ENCODE measurements at regions of chr17 and their contacts with region 1.

Region 1: GRCh38 chr17:49031965-49032928 is 35.1 kb downstream of the IGF2BP1 start:
- DNase-seq: peak; percentile 92 to 93
- H3K4me3 ChIP-seq: no peak overlapping the region
- H3K4me3 Mint-ChIP-seq: peak overlapping the region; percentile 0
- H3K27ac Mint-ChIP-seq: peak overlapping the region; percentile 34
- H3K4me1 ChIP-seq: peaks cover 21% of the 10 kb centered on the region
- H3K4me1 Mint-ChIP-seq: peaks cover 52% of the 10 kb centered on the region
- H3K27me3 ChIP-seq: no peaks in the 10 kb centered on the region
- H3K27me3 Mint-ChIP-seq: no peaks in the 10 kb centered on the region
- CTCF ChIP-seq: peak; percentile 98 to 99

Region 2: GRCh38 chr17:48678141-48678971 is 353.9 kb before region 1 on chr17:
- CTCF ChIA-PET with region 1: interaction called, 5 read pairs
- POLR2A ChIA-PET with region 1: no interaction called
- intact Hi-C with region 1: loop called (anchors 10 kb)
- DNase-seq: peak; percentile 69 to 87
- H3K4me3 ChIP-seq: no peak overlapping the region
- H3K4me3 Mint-ChIP-seq: no peak overlapping the region
- H3K27ac Mint-ChIP-seq: no peak overlapping the region
- H3K4me1 ChIP-seq: no peaks in the 10 kb centered on the region
- H3K4me1 Mint-ChIP-seq: no peaks in the 10 kb centered on the region
- H3K27me3 ChIP-seq: no peaks in the 10 kb centered on the region
- H3K27me3 Mint-ChIP-seq: peaks cover 8% of the 10 kb centered on the region
- CTCF ChIP-seq: peak; percentile 99

Region 3: GRCh38 chr17:48892940-48893645 is 139.2 kb before region 1 on chr17:
- CTCF ChIA-PET with region 1: interaction called, 46 read pairs
- POLR2A ChIA-PET with region 1: interaction called, 9 read pairs
- intact Hi-C with region 1: loop called (anchors 1 kb)
- DNase-seq: no peak
- H3K4me3 ChIP-seq: peak overlapping the region; percentile 73
- H3K4me3 Mint-ChIP-seq: peak overlapping the region; percentile 84
- H3K27ac Mint-ChIP-seq: peak overlapping the region; percentile 90
- H3K4me1 ChIP-seq: peaks cover 13% of the 10 kb centered on the region
- H3K4me1 Mint-ChIP-seq: peaks cover 12% of the 10 kb centered on the region
- H3K27me3 ChIP-seq: no peaks in the 10 kb centered on the region
- H3K27me3 Mint-ChIP-seq: peaks cover 2% of the 10 kb centered on the region
- CTCF ChIP-seq: no peak

Region 4: DNA sequence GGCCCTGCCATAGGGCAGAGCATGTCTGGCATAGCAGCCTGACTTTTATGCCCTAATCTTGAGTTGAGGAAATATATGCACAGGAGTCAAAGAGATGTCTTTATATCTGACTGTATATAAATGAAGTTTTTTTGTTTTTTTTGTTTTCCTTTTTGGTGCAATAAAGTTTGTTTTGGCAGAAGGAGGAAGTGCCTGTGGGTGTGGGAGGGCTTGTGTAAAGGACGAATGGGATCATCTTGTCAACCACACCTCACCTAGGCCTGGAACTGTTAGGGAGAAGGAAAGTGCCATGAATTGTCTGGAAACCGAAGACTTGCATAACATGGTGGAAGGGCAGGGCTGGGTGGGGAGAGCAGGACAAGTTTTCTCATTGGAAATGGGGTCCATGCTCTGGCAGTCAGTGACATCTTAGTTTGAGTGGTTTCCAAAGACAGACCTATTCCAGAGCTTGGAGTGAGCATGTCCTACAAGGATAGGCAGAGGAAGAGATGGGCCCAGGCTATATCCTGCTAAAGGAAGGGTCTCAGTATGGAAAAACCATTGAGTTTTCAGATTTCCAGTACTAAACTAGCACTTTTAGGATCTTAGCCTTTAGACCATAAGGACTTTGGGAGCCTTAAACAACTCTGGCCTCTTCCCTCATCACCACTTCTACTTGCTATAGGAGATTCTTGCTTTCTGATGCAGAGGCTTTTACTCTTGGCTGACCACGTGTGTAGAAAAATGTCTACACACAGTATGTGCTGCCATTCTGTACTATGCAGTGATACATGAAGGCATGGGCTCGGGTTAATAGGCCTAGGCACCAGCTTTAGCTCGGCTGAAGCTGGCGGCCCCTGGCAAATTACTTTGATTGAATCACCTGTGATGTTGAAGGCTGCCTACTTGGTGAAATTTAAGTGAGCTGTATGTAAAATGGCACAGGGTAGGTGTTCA is 103.1 kb before region 1 on chr17:
- CTCF ChIA-PET with region 1: interaction called, 10 read pairs
- POLR2A ChIA-PET with region 1: interaction called, 5 read pairs
- intact Hi-C with region 1: no loop called
- DNase-seq: no peak
- H3K4me3 ChIP-seq: no peak overlapping the region
- H3K4me3 Mint-ChIP-seq: no peak overlapping the region
- H3K27ac Mint-ChIP-seq: no peak overlapping the region
- H3K4me1 ChIP-seq: no peaks in the 10 kb centered on the region
- H3K4me1 Mint-ChIP-seq: no peaks in the 10 kb centered on the region
- H3K27me3 ChIP-seq: no peaks in the 10 kb centered on the region
- H3K27me3 Mint-ChIP-seq: no peaks in the 10 kb centered on the region
- CTCF ChIP-seq: no peak

Region 5: DNA sequence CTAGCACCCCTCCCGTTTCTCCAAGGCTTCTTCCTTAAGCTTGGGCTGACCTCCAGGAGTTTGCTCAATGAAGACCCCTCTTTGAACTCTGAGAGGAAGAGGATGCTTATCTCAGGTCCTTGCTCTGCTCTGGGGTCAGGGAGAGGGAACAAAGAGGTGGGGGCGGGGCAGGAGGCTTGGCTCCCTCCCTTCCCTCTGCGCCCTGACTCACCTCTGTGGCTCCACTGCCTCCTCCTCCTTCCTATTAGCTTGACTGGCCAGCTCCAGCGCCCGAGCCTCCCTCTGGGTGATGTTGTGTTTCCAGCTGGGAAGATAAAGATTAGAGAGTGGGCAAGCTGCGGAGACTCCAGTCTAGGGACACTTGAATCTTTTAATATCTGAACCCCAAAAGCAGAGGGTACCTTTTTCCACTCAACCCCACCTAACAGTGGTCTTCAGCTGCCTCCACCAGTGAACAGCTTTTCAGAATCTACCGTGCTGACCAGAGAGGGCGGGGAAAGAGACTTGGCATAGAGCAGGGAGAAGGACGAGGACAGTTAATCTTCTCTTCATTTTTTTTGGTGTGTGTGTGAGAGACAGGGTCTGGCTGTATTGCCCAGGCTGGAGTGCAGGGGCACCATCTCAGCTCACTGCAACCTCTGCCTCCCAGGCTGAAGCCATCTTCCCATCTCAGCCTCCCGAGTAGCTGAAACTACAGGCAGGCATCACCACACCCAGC is 70.6 kb before region 1 on chr17:
- CTCF ChIA-PET with region 1: interaction called, 29 read pairs
- POLR2A ChIA-PET with region 1: no interaction called
- intact Hi-C with region 1: no loop called
- DNase-seq: peak; percentile 73 to 80
- H3K4me3 ChIP-seq: no peak overlapping the region
- H3K4me3 Mint-ChIP-seq: peak overlapping the region; percentile 39
- H3K27ac Mint-ChIP-seq: peak overlapping the region; percentile 80
- H3K4me1 ChIP-seq: peaks cover 28% of the 10 kb centered on the region
- H3K4me1 Mint-ChIP-seq: peaks cover 24% of the 10 kb centered on the region
- H3K27me3 ChIP-seq: no peaks in the 10 kb centered on the region
- H3K27me3 Mint-ChIP-seq: no peaks in the 10 kb centered on the region
- CTCF ChIP-seq: no peak

Region 6: DNA sequence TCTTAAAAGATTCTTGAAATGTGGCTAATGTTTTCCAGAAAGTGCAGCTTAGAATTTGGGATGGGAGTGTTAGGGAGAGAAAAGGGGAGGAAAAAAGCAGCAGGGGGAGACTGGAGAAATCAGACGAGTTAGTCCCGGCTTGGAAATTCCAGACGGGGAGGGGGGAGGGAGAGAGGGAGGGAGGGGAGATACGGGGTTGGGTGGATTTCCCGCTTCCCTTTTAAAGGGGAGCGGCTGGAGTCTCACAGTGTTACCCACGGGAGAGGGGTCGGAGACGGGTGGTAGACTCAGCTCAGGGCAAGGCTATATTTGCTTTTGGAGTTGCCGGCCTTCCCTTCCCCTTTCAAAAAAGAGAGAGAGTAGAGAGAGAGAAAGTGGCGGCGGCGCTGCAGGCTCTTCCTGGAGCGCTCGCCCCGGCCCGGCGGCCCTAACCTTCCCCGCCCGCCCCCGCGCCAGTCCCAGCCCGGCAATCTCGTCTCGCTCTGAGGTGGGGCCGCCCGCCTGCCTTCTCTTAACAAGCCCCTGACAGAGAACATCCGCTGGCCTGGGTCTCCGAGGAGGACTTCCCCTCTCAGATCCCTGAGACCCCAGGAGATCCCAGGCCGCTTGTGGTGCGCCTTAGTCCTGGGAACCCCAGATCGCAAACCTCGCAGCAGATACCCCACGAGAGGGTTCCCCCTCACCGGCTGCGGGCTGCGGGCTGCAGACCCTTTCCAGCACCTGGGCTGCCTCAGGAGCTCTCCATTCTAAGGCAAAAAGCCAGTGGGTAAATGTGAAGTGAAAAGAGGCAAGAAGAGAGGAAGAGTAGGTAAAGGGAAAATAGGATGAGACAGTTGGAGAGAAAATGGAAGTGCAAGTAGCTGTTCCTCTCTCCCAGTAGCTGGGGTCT is 28.4 kb before region 1 on chr17:
- CTCF ChIA-PET with region 1: interaction called, 136 read pairs
- POLR2A ChIA-PET with region 1: interaction called, 7 read pairs
- intact Hi-C with region 1: no loop called
- DNase-seq: no peak
- H3K4me3 ChIP-seq: no peak overlapping the region
- H3K4me3 Mint-ChIP-seq: peak overlapping the region; percentile 36
- H3K27ac Mint-ChIP-seq: peak overlapping the region; percentile 60
- H3K4me1 ChIP-seq: peaks cover 79% of the 10 kb centered on the region
- H3K4me1 Mint-ChIP-seq: peaks cover 81% of the 10 kb centered on the region
- H3K27me3 ChIP-seq: no peaks in the 10 kb centered on the region
- H3K27me3 Mint-ChIP-seq: no peaks in the 10 kb centered on the region
- CTCF ChIP-seq: no peak